Panc1 (cell line): ENCODE measurements at regions of chr6 and their contacts with region 1.

Region 1: DNA sequence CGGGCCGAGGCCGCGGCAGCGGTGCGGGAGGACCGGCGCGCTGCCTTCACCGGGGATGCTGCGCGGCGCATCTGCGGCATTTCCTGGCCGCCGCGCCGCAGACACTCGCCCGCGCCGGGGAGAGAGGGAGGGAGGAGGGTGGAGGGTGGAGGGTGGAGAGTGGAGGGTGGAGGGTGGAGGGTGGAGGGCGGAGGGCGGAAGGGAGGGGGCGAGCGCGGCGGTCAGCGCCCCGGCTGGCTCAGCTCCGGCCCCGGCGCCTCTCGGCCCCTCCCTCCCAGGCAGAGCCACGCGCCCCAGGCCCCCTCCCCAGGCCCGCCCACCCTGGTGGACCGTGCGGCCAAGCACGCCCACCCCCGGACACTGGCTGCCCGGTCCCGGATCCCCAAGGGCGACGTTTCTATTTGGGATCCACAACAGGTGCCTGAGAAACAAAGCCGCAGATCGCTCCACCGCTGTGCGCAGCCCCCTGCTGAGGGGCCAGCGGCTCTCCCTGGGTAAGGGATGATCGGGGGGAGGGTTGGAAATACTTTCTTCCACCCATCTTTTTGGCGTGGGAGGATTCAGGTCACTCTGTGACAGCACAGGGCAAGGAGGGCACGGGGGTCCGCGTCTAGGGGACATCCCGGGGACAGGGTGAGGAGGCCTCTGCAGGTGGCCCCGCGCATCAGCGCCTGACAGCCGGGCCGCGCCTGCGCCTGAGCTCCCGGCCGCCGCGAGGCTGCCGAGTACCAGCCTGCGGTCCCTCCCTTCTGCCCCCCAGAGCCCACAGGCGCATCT is 111.1 kb upstream of the BEND6 start:
- DNase-seq: no peak
- ATAC-seq: peak; percentile 94
- H3K4me3 ChIP-seq: peak overlapping the region; percentile 80 to 99
- H3K27ac ChIP-seq: peak overlapping the region; percentile 82
- H3K4me1 ChIP-seq: peaks cover 48% of the 10 kb centered on the region
- H3K27me3 ChIP-seq: no peaks in the 10 kb centered on the region
- CTCF ChIP-seq: peak; percentile 91

Region 2: DNA sequence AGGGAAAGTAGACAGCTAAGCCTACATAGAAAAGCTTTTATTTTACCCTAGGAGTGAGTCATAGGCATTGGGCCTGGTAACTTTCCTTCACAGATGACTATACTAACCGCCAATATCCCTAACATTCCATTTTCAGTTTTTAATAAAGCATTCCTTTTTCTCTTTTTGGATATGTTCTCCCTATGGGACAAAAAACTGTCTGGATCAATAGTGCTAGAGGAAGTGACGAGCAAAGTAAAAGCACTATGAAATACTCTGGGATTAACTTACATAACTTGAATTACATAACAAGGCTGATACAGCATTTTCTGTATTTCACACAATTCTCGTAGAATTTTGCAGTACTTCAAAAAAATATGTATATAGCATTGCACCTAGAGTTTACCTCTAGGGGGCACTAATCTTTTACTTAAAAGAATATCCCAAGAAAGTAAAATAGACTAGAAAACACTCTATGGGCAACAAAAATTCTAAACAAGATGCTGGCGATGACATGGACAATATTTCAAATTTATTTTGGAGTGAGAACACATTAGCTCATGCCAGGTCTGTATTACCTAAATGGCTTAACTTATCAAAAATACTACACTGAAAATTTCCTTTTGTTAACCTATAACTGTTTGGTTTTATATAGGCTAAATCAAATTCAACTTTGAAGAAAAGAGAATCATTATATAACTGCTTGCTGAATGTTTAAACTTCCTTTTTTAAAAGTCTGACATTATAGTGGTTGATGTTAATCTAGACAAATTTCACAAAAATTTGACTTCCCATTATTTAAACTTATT is 134.8 kb before region 1 on chr6:
- CTCF ChIA-PET with region 1: interaction called, 3 read pairs
- POLR2A ChIA-PET with region 1: interaction called, 3 read pairs
- in situ Hi-C with region 1: no loop called
- intact Hi-C with region 1: loop called (anchors 5 kb)
- DNase-seq: no peak
- ATAC-seq: peak; percentile 64
- H3K4me3 ChIP-seq: no peak overlapping the region; a peak in 1 of 4 replicates
- H3K27ac ChIP-seq: peak overlapping the region; percentile 82
- H3K4me1 ChIP-seq: peaks cover 65% of the 10 kb centered on the region
- H3K27me3 ChIP-seq: no peaks in the 10 kb centered on the region
- CTCF ChIP-seq: peak; percentile 72; the same call in 1 of the 2 replicates

Region 3: GRCh38 chr6:56787209-56787608 is 56.6 kb before region 1 on chr6:
- CTCF ChIA-PET with region 1: interaction called, 14 read pairs
- POLR2A ChIA-PET with region 1: no interaction called
- in situ Hi-C with region 1: no loop called
- intact Hi-C with region 1: no loop called
- DNase-seq: no peak
- ATAC-seq: no peak
- H3K4me3 ChIP-seq: no peak overlapping the region
- H3K27ac ChIP-seq: no peak overlapping the region
- H3K4me1 ChIP-seq: peaks cover 15% of the 10 kb centered on the region
- H3K27me3 ChIP-seq: no peaks in the 10 kb centered on the region
- CTCF ChIP-seq: no peak